ENCODE measurements at regions of chr14 and their contacts with region 1.

Region 1: GRCh38 chr14:61475316-61475715 is 153.9 kb downstream of the PRKCH start:
- DNase-seq: no peak
- ATAC-seq: no peak
- H3K4me3 ChIP-seq: no peak overlapping the region
- H3K27ac ChIP-seq: no peak overlapping the region
- H3K4me1 ChIP-seq: peaks cover 0 to 3% of the 10 kb centered on the region in 2 donors
- H3K27me3 ChIP-seq: no peaks in the 10 kb centered on the region

Region 2: GRCh38 chr14:61368114-61368726 is 107.1 kb before region 1 on chr14:
- intact Hi-C with region 1: no loop called
- DNase-seq: no peak
- ATAC-seq: no peak
- H3K4me3 ChIP-seq: no peak overlapping the region
- H3K27ac ChIP-seq: no peak overlapping the region
- H3K4me1 ChIP-seq: no peaks in the 10 kb centered on the region
- H3K27me3 ChIP-seq: no peaks in the 10 kb centered on the region

Region 3: GRCh38 chr14:61512026-61512834 is 36.9 kb after region 1 on chr14:
- intact Hi-C with region 1: loop called in 1 of 2 experiments (anchors 5 kb)
- DNase-seq: no peak
- ATAC-seq: peak; percentile 58
- H3K4me3 ChIP-seq: no peak overlapping the region
- H3K27ac ChIP-seq: no peak overlapping the region
- H3K4me1 ChIP-seq: peaks cover 0 to 2% of the 10 kb centered on the region in 2 donors
- H3K27me3 ChIP-seq: no peaks in the 10 kb centered on the region

Region 4: GRCh38 chr14:61547186-61548086 is 72.1 kb after region 1 on chr14:
- intact Hi-C with region 1: loop called in 1 of 2 experiments (anchors 5 kb)
- DNase-seq: peak in 1 of 2 donors; percentile 77
- ATAC-seq: peak; percentile 53
- H3K4me3 ChIP-seq: no peak overlapping the region
- H3K27ac ChIP-seq: peak overlapping the region in 1 of 2 donors; percentile 42
- H3K4me1 ChIP-seq: peaks cover 7 to 9% of the 10 kb centered on the region in 2 donors
- H3K27me3 ChIP-seq: no peaks in the 10 kb centered on the region

Region 5: DNA sequence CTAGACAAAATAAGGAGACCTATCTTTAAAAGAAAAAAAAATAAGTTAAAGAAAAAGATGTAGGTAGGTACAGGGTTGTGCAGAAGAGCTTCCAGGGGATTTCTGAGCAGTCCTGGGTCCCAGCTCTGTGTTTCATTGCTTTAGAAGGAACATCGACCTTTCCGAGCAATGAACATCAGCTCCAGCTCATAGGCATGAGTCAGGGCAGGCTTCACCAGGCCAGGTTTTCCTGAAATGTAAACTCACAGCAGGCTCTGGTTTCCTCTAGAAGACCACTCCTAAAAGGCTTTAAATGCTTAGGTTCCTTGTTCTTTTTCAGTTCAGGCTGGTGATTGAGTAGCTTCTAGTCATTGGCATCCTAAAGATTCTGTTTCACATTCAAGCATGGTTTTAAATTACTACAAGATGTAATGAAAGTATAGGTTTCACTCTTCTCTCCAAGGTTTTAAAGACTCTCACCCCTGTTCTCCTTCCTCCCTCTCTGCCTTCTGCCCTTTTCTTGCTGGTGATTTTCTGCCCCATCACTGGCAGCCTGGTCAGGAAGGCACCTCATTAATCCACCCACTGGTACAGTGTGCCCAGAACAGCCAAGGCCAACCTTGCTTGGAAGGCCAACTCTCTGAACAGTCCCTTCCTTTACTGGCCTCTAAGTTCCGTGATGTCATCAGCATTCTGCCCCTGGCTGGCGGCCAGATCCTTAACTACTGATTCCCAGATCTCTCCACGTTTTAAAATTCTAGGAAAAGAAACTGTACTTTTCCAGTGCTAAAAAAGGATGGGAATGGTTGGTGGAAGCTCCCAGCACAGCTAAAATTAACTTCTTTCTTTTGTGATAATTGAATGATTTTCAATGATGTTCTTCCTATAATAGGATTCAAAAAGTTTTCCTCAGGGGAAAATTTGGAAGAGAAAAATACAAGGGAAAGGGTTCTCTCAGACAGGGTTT is 110.6 kb after region 1 on chr14:
- intact Hi-C with region 1: loop called (anchors 5 kb)
- DNase-seq: peak; percentile 90 to 92
- ATAC-seq: peak; percentile 91
- H3K4me3 ChIP-seq: no peak overlapping the region
- H3K27ac ChIP-seq: peak overlapping the region; percentile 80 to 100
- H3K4me1 ChIP-seq: peaks cover 9 to 17% of the 10 kb centered on the region in 2 donors
- H3K27me3 ChIP-seq: no peaks in the 10 kb centered on the region

Region 6: GRCh38 chr14:61749867-61750266 is 274.6 kb after region 1 on chr14:
- intact Hi-C with region 1: loop called in 1 of 2 experiments (anchors 5 kb)
- DNase-seq: no peak
- ATAC-seq: no peak
- H3K4me3 ChIP-seq: peak overlapping the region in 1 of 2 donors; percentile 26
- H3K27ac ChIP-seq: no peak overlapping the region
- H3K4me1 ChIP-seq: peaks cover 0 to 1% of the 10 kb centered on the region in 2 donors
- H3K27me3 ChIP-seq: no peaks in the 10 kb centered on the region